Ascending aorta (tissue), 2 donors: ENCODE measurements at regions of chr17 and their contacts with region 1.

Region 1: DNA sequence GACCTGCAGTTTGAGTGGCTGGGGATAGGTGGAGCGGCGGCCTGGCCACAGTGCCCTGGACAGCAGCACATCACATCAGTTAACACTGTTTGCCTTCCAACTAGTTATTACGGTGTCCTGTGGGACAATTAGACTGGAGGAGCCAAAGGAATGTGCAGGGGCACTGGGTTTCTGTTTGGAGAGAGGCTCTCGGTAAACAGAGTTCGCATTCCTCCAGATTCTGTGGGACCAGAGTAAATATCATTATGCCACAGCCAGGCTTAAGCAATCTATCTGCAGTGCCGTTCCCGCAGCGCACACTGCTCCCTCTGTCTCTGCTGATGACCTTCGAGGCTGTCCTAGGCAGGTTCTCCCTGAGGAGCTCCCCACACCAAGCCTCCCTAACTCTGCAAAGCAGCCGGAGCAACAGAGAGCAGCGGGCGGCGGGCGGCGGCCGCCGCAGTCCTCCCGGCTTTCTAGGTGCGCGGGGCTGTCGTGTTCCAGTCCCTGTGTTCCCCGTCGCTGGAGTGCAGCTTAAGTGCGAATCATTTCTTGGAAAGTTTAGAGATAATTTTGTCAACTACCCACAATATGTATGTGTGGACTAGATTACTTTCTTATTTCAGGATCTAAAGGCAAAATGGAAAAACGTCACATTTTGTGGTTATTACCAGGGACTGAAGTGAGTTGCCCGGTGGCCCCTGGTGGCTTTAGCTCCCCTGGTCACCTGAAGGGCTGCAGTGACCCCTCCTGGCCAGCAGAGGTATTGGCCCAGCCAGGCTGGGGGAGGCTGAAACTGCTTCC is 43.2 kb downstream of the PGS1 start:
- DNase-seq: peak in 1 of 2 donors; percentile 86
- H3K4me3 ChIP-seq: no peak overlapping the region
- H3K27ac ChIP-seq: no peak overlapping the region
- H3K4me1 ChIP-seq: no peaks in the 10 kb centered on the region
- H3K27me3 ChIP-seq: no peaks in the 10 kb centered on the region
- CTCF ChIP-seq: peak; percentile 96 to 100 (median 97)

Region 2: GRCh38 chr17:78250891-78251794 is 170.5 kb before region 1 on chr17:
- intact Hi-C with region 1: loop called (anchors 5 kb)
- DNase-seq: peak in 1 of 2 donors; percentile 87
- H3K4me3 ChIP-seq: no peak overlapping the region
- H3K27ac ChIP-seq: no peak overlapping the region
- H3K4me1 ChIP-seq: peaks cover 0 to 5% of the 10 kb centered on the region in 2 donors
- H3K27me3 ChIP-seq: no peaks in the 10 kb centered on the region
- CTCF ChIP-seq: peak; percentile 98 to 100 (median 100)

Region 3: GRCh38 chr17:78289802-78290363 is 131.8 kb before region 1 on chr17:
- intact Hi-C with region 1: loop called (anchors 1 kb)
- DNase-seq: peak in 1 of 2 donors; percentile 85
- H3K4me3 ChIP-seq: no peak overlapping the region
- H3K27ac ChIP-seq: no peak overlapping the region
- H3K4me1 ChIP-seq: no peaks in the 10 kb centered on the region
- H3K27me3 ChIP-seq: no peaks in the 10 kb centered on the region
- CTCF ChIP-seq: peak; percentile 77 to 79 (median 77)

Region 4: DNA sequence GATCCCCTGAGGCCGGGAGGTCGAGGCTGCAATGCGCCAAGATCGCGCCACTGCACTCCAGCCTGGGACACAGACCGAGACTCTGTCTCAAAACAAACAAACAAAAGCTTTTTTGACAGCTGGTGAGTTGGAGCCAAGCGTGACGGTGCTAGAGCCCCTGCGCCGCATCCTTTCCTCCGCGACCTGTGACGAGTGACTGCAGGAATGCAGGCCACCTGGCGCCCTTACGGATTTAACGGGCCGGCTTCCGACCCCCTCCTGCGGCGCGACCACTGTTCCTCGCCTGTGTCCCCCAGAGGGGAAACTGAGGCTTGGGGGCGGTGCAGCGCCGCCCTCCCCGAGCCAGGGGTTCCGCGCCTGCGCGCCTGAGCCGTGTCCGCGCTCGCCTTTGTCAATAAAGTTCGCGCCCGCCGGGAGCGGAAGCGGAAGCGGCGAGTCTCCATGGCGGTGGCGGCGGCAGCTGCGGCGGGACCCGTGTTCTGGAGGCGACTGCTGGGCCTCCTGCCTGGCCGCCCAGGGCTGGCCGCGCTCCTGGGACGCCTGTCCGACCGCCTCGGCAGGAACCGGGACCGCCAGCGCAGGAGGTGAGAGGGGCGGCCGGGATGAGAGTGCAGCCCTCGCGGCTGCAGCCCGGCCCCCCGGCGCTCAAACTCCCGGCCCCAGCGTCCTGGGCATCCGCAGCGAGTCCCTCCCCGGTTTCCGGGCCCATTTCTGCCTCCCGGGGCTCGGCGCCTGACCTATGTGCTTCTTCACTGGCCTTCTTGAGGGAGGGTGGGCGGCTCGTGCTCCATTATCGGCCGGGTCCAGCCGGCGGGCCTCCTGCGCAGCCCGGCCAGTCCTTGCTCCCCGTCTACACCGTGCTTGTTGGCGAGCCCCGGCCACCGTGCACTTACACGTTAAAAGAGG is 43.2 kb before region 1 on chr17 and contains the start of gene PGS1:
- intact Hi-C with region 1: loop called (anchors 5 kb)
- DNase-seq: peak in 1 of 2 donors; percentile 89
- H3K4me3 ChIP-seq: peak within 1 kb of the TSS; percentile 86 to 97
- H3K27ac ChIP-seq: peak within 1 kb of the TSS; percentile 89 to 94
- H3K4me1 ChIP-seq: peaks cover 18 to 23% of the 10 kb centered on the region in 2 donors
- H3K27me3 ChIP-seq: no peaks in the 10 kb centered on the region
- CTCF ChIP-seq: no peak
- total RNA-seq, gene PGS1: 41.8 TPM

Region 5: DNA sequence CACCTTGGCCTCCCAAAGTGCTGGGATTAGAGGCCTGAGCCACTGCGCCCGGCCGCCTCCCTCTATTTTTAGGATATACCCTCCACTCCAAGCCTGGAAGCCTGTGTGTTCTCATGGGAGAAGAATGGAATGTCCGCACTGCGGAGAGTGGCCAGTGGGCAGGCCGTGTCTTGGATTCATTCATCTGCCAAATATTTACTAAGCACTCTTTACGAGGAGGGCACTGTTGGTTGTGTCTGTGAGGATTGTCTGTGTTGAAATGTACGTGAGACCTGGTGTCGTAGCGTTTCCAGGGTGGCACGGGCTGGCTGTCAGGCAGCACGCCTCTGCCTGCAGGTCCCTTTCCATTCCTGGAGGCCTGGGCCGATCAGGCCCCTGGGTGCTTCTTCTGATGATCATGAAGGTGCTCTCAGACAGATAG is 24.0 kb before region 1 on chr17:
- intact Hi-C with region 1: loop called (anchors 2 kb)
- DNase-seq: peak in 1 of 2 donors; percentile 85
- H3K4me3 ChIP-seq: peak overlapping the region in 1 of 2 donors; percentile 34
- H3K27ac ChIP-seq: peak overlapping the region; percentile 84 to 89
- H3K4me1 ChIP-seq: peaks cover 6 to 27% of the 10 kb centered on the region in 2 donors
- H3K27me3 ChIP-seq: no peaks in the 10 kb centered on the region
- CTCF ChIP-seq: no peak